HEK293 (cell line): ENCODE measurements at regions of chr20 and their contacts with region 1.

Region 1: GRCh38 chr20:35994994-35995453 is 26.6 kb downstream of the CNBD2 start:
- H3K4me3 ChIP-seq: no peak overlapping the region
- H3K27ac ChIP-seq: no peak overlapping the region
- H3K4me1 ChIP-seq: no peaks in the 10 kb centered on the region
- CTCF ChIP-seq: peak; percentile 83

Region 2: GRCh38 chr20:35954200-35954906 is 40.7 kb before region 1 on chr20 and contains the start of gene SCAND1:
- CTCF ChIA-PET with region 1: interaction called, 46 read pairs
- POLR2A ChIA-PET with region 1: interaction called, 7 read pairs
- H3K4me3 ChIP-seq: peak within 1 kb of the TSS; percentile 77
- H3K27ac ChIP-seq: peak within 1 kb of the TSS; percentile 89
- H3K4me1 ChIP-seq: no peaks in the 10 kb centered on the region
- CTCF ChIP-seq: peak; percentile 100

Region 3: DNA sequence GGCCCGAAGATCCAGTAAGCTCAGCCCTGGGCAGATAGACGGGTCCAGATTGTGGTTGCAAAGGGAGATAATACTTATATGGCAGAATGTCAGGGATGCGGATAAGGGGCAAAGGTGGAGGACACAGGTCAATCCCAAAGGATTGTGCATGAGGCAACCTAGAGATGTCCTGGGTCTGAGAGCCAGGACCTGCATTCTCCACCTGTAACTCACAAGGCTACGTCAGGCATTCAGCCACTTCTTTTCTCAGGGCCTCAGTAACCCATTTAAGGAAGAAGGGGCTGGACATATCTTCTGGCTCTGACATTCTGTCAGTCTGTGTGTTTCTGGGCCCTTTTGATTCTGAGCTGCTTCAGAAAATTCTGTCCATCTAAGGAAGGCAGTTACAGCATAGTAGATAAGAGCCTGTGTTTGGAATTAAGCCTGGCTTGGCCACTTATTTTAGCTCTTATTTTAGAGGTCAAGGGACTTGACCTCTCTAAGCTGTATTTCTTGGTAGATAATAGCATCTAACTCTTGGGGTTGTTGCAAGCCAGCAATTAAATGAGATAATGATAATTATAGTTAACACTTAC is 13.5 kb after region 1 on chr20:
- CTCF ChIA-PET with region 1: interaction called, 16 read pairs
- POLR2A ChIA-PET with region 1: no interaction called
- H3K4me3 ChIP-seq: no peak overlapping the region
- H3K27ac ChIP-seq: no peak overlapping the region
- H3K4me1 ChIP-seq: no peaks in the 10 kb centered on the region
- CTCF ChIP-seq: no peak

Region 4: GRCh38 chr20:36145877-36146707 is 151.1 kb after region 1 on chr20:
- CTCF ChIA-PET with region 1: interaction called, 308 read pairs
- POLR2A ChIA-PET with region 1: no interaction called
- H3K4me3 ChIP-seq: no peak overlapping the region
- H3K27ac ChIP-seq: no peak overlapping the region
- H3K4me1 ChIP-seq: no peaks in the 10 kb centered on the region
- CTCF ChIP-seq: no peak

Region 5: DNA sequence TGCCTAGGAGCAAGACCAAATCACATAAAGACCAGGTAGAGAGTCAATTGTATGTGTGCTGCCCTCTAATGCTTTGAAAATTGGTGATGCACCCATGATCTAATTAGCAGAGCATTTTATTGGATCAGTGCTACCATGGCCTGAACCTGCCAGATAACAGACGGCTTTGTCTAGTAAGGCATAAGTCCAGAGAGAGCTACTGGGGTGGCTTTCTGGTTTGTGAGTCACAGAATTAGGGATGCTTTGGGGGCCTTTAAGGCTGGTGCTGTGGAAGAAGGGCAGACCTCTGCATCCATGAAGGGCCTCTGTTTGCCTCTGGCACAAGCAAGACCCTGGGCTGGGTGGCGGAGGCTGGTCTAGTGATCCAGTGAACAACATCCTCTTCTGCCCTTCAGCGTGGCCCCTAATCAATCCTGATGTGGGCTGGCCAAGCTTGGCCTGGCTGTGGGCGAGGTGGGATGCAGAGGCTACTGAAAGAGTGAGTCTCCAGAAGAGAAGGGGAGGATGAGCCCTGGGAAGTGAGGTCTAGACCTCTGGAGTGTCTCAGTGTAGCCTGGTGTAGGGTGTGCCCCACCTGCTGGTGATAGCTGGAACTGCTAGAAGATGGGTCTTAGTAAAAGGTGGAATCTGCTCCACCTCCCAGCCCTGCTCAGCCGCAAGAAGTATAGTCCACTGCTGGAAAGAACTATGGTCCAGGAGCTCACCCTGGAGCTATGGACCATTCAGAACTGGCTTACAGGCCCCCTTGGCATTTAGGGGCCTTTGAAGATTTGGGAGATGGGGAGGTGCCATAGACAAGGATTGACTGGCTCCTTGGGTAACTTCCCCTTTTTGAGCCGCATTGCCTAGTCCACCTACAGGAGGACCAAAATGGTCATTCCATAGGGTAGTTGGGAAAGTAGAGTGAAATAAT is 204.6 kb after region 1 on chr20:
- CTCF ChIA-PET with region 1: interaction called, 16 read pairs
- POLR2A ChIA-PET with region 1: interaction called, 5 read pairs
- H3K4me3 ChIP-seq: no peak overlapping the region
- H3K27ac ChIP-seq: no peak overlapping the region
- H3K4me1 ChIP-seq: no peaks in the 10 kb centered on the region
- CTCF ChIP-seq: peak; percentile 72

Region 6: DNA sequence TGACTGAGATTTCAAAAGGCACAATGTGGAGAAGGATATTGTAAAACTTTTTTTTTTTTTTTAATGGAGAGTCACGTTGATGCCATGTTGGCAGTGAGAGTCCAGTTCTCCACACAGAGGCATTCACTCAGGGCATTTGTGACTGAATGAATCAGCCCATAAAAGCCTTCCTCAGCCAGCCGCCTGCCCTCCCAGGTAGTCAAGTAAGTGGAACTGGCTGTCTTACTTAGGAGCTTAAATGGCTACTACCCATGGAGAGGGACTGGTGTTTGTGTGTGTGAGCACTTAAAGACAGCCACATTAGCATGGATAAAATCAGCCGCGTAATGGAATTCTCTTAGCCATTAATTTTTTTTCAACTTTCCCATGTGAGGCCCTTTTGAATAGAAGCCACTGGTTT is 253.8 kb after region 1 on chr20:
- CTCF ChIA-PET with region 1: no interaction called
- POLR2A ChIA-PET with region 1: no interaction called
- H3K4me3 ChIP-seq: no peak overlapping the region
- H3K27ac ChIP-seq: no peak overlapping the region
- H3K4me1 ChIP-seq: no peaks in the 10 kb centered on the region
- CTCF ChIP-seq: no peak